ENCODE measurements at regions of chr15 and their contacts with region 1.

Region 1: DNA sequence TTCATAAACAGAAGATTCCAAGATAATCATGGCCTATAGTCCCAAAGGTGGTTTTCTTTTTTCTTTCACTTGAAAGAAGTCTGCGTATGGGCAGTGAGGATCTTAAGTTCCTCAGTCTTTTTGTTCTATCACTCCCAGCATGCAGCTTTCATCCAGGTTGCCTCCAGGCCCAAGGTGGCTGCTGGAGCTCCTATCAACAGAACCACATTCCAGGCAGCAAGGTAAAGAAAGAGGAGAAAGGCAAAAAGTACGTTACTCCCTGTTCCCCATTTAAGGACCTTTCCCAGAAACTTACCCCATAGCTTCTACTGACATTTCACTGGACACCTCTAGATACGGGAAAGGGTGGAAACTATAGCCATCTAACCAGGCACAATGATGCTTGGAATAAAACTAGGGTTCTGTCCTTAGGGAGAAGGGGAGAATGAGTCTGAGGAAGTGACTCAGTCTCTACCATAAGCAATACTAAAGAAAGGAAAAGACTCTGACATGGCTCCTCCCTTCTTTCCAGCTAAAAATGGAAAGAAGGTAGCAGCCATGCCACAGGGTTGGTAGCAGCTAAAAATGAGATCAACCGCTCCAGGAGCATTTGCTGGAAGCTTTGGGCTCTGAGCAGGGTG is 313.9 kb upstream of the NR2E3 start:
- DNase-seq: no peak
- ATAC-seq: no peak
- H3K4me3 ChIP-seq: no peak overlapping the region
- H3K27ac ChIP-seq: no peak overlapping the region
- H3K4me1 ChIP-seq: no peaks in the 10 kb centered on the region
- CTCF ChIP-seq: no peak
- EP300 ChIP-seq: no peak
- POLR2A ChIP-seq: no peak
- RAD21 ChIP-seq: no peak

Region 2: DNA sequence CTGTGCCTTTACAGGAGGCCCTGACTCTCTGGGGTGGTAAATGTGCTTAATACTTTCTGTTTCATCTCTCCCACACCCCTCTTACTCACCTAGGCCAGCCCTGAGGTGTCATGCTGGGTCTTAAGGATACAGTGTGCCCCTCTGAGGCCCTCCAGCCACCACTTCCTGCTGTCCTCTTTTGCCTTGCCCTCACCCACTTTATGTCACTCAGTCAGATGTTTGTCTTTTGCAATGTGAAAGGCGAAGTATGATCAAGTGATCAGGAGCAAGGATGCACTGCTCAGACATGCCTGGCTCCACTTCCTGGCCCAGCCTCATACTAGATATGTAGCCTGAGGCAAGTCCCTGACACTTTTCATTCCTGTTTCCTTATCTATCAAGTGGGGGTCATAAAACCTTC is 25.1 kb before region 1 on chr15:
- CTCF ChIA-PET with region 1: no interaction called
- POLR2A ChIA-PET with region 1: no interaction called
- DNase-seq: peak in 1 of 2 experiments; percentile 36
- ATAC-seq: peak; percentile 35 to 47; a peak in 4 of 6 replicates
- H3K4me3 ChIP-seq: no peak overlapping the region
- H3K27ac ChIP-seq: peak overlapping the region; percentile 10 to 59; a peak in 3 of 6 replicates
- H3K4me1 ChIP-seq: peaks cover 10% of the 10 kb centered on the region
- CTCF ChIP-seq: no peak
- EP300 ChIP-seq: no peak
- POLR2A ChIP-seq: no peak
- RAD21 ChIP-seq: no peak

Region 3: GRCh38 chr15:71485099-71485693 is 11.2 kb before region 1 on chr15:
- CTCF ChIA-PET with region 1: interaction called, 19 read pairs
- POLR2A ChIA-PET with region 1: no interaction called
- DNase-seq: peak; percentile 31 to 33
- ATAC-seq: peak; percentile 83 to 94; a peak in 5 of 6 replicates
- H3K4me3 ChIP-seq: no peak overlapping the region
- H3K27ac ChIP-seq: no peak overlapping the region
- H3K4me1 ChIP-seq: no peaks in the 10 kb centered on the region
- CTCF ChIP-seq: peak; percentile 51
- EP300 ChIP-seq: no peak
- POLR2A ChIP-seq: no peak
- RAD21 ChIP-seq: peak in 1 of 2 experiments; percentile 16; a peak in 1 of 5 replicates